Lower leg skin (tissue), 4 donors: ENCODE measurements at regions of chr20 and their contacts with region 1.

Region 1: GRCh38 chr20:51595058-51595532 is 52.6 kb upstream of the NFATC2 start:
- DNase-seq: peak; percentile 92 to 98
- H3K4me3 ChIP-seq: no peak overlapping the region
- CTCF ChIP-seq: peak in 1 of 3 donors; percentile 93
- POLR2A ChIP-seq: no peak

Region 2: GRCh38 chr20:50992733-50993457 is 602.2 kb before region 1 on chr20:
- intact Hi-C with region 1: loop called (anchors 10 kb)
- DNase-seq: no peak
- H3K4me3 ChIP-seq: no peak overlapping the region
- CTCF ChIP-seq: peak in 1 of 3 donors; percentile 52
- POLR2A ChIP-seq: no peak

Region 3: GRCh38 chr20:51372176-51372803 is 222.8 kb before region 1 on chr20:
- intact Hi-C with region 1: loop called (anchors 5 kb)
- DNase-seq: peak; percentile 58 to 89
- H3K4me3 ChIP-seq: no peak overlapping the region
- CTCF ChIP-seq: peak in 1 of 3 donors; percentile 82
- POLR2A ChIP-seq: no peak

Region 4: DNA sequence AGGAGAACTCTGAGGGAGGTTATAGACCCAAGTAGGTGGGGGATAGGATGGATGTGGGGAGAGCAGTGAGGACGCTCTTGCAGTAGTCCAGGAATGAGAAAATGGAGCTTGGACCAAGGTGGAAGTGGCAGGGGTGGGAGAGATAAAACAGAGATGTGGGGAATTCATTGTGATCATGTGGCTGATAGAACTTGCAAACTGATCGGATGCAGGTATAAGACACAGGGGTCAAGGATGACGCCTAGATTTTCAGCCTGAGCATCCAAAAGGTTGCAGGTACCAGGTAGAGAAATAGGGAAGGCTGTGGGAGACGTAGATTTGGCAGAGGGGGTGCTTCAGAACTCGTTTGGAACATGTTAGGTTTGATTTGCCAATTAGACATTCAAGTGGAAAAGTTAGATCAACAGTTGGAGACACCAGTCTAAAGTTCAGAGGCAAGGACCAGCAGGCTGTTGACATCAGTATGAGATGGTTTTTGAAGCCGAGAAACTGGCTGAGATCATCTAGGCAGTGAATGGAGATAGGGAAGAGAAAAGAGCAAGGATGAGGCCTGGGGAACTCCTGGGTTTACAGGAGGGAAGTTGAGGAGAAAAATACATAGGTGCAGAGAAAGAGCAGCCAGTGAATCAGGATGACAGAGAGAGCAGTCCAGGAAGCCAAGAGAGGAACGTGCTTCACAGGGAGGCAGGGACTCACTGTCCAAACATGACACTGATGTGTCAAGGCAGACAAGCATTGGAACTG is 220.1 kb after region 1 on chr20:
- intact Hi-C with region 1: no loop called
- DNase-seq: no peak
- H3K4me3 ChIP-seq: no peak overlapping the region
- CTCF ChIP-seq: no peak
- POLR2A ChIP-seq: no peak